Activated CD4-positive, alpha-beta memory T cell treated with anti-CD3 and anti-CD28 coated beads, Interleukin-2, amount 10 ng/mL, durations not matched to agents 7 days and 5 days (primary cell): ENCODE measurements at regions of chr12 and their contacts with region 1.

Region 1: DNA sequence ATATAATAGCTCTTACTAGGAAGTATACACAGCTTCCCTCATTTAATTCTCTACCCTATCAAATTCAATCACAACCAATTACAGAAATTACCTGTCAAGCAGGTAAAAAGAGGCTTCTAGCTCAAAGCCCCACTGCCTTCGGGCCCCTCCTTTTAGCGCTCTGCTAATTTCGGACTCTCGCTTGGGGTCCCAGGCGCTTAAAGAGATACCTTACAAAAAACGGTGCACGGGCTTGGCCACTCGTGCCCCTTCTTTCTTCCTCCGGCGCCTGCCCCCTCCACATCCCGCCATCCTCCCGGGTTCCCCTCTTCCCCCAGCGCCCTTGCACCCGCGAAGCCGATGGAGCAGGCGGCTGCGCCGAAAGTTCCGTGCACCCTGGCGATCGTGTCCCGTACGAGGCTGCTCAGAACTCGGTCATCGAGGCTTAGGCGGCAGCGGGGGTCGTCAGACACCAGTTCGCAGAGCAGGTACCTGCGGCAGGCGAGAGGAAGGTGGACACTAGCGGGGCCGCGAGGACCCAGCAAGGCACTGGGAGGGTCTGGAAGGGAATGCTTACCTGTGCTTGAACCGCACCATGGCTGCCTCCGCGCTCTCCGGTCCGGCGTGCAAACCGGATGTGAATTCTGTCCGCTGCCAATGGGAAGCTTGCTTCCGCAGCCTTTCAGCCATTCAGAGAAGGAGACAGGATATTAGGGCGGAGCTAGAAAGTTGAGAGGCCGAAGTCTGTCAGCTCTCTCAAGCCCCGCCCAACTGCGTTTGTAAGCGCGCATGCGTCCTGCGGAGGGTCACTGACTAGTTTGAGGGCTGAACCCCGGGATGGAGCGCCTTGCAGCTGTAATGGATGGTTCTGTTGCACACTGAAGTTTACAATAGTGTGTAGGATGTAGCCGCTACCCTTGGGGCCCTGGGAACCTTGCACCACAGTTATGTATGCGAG is at the start of gene POP5:
- DNase-seq: peak; percentile 95
- H3K4me3 Mint-ChIP-seq: peak within 1 kb of the TSS; percentile 94
- H3K27ac Mint-ChIP-seq: peak within 1 kb of the TSS; percentile 78
- H3K4me1 Mint-ChIP-seq: peaks cover 42% of the 10 kb centered on the region
- H3K27me3 Mint-ChIP-seq: peaks cover 13% of the 10 kb centered on the region
- total RNA-seq, gene POP5: 37.6 to 38.8 TPM

Region 2: GRCh38 chr12:120534203-120534702 is 46.8 kb before region 1 on chr12 and contains the start of gene RNF10:
- CTCF ChIA-PET with region 1: interaction called, 12 read pairs
- POLR2A ChIA-PET with region 1: interaction called, 18 read pairs
- DNase-seq: peak; percentile 78
- H3K4me3 Mint-ChIP-seq: peak within 1 kb of the TSS; percentile 88
- H3K27ac Mint-ChIP-seq: peak within 1 kb of the TSS; percentile 93
- H3K4me1 Mint-ChIP-seq: peaks cover 52% of the 10 kb centered on the region
- H3K27me3 Mint-ChIP-seq: no peaks in the 10 kb centered on the region
- total RNA-seq, gene RNF10: 225 to 229 TPM

Region 3: DNA sequence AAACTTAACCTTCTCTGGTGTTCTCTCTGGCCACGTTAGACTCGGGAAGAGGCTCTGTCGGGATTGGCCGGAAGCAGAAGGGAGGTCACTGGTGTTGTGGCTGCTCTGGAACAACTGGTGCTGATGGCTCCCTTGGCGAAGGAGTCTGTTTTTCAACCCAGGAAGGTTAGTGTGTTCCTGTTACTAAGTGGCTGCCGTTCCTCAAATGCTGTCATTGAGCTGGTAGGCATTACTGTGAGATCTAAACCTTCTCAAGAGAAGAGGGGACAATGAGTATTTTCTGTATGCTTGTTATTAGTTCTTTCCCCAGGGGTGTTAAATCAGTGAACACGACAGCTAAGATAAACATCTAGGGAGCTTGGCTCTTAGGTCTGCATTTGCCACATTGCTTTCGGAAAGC is 18.1 kb before region 1 on chr12:
- CTCF ChIA-PET with region 1: interaction called, 16 read pairs
- POLR2A ChIA-PET with region 1: interaction called, 5 read pairs
- DNase-seq: no peak
- H3K4me3 Mint-ChIP-seq: no peak overlapping the region
- H3K27ac Mint-ChIP-seq: no peak overlapping the region
- H3K4me1 Mint-ChIP-seq: no peaks in the 10 kb centered on the region
- H3K27me3 Mint-ChIP-seq: no peaks in the 10 kb centered on the region

Region 4: GRCh38 chr12:120614873-120615272 is 33.8 kb after region 1 on chr12:
- CTCF ChIA-PET with region 1: no interaction called
- POLR2A ChIA-PET with region 1: no interaction called
- DNase-seq: no peak
- H3K4me3 Mint-ChIP-seq: no peak overlapping the region
- H3K27ac Mint-ChIP-seq: no peak overlapping the region
- H3K4me1 Mint-ChIP-seq: no peaks in the 10 kb centered on the region
- H3K27me3 Mint-ChIP-seq: peaks cover 21% of the 10 kb centered on the region

Region 5: GRCh38 chr12:120710031-120710804 is 129.2 kb after region 1 on chr12 and contains the start of gene UNC119B:
- CTCF ChIA-PET with region 1: interaction called, 10 read pairs
- POLR2A ChIA-PET with region 1: interaction called, 11 read pairs
- DNase-seq: peak; percentile 76
- H3K4me3 Mint-ChIP-seq: peak within 1 kb of the TSS; percentile 84
- H3K27ac Mint-ChIP-seq: peak within 1 kb of the TSS; percentile 65
- H3K4me1 Mint-ChIP-seq: peaks cover 34% of the 10 kb centered on the region
- H3K27me3 Mint-ChIP-seq: no peaks in the 10 kb centered on the region
- total RNA-seq, gene UNC119B: 22.4 to 23.6 TPM

Region 6: GRCh38 chr12:120971299-120972179 is 390.5 kb after region 1 on chr12:
- CTCF ChIA-PET with region 1: interaction called, 24 read pairs
- POLR2A ChIA-PET with region 1: interaction called, 3 read pairs
- DNase-seq: peak; percentile 28
- H3K4me3 Mint-ChIP-seq: no peak overlapping the region
- H3K27ac Mint-ChIP-seq: no peak overlapping the region
- H3K4me1 Mint-ChIP-seq: peaks cover 7% of the 10 kb centered on the region
- H3K27me3 Mint-ChIP-seq: peaks cover 1% of the 10 kb centered on the region